GM10248 (cell line): ENCODE measurements at regions of chr1 and their contacts with region 1.

Region 1: GRCh38 chr1:17023102-17023501 is 11.4 kb upstream of the ATP13A2 start:
- DNase-seq: no peak
- CTCF ChIP-seq: no peak

Region 2: DNA sequence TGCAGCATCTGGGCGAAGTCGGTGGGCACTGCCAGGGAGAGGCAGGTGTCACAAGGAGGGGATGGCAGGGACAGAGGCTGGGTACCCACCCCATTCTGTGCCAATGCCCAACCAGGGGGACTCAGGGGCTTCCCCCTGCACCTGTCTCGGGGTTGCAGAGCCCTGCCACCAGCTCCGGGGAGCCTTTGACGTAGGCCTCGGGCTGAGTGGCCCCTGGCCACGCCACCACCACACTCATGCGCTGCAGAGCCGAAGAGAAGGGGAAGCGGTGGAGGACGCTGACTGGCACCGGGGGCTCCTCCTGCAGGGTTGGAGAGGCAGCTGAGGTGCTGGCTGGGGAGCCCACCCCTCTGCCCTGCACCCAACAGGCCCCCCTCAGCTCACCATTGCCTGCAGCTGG is 31.0 kb before region 1 on chr1:
- CTCF ChIA-PET with region 1: no interaction called
- POLR2A ChIA-PET with region 1: no interaction called
- DNase-seq: no peak
- CTCF ChIP-seq: no peak

Region 3: GRCh38 chr1:17011439-17012307 is 11.4 kb before region 1 on chr1 and contains the start of gene ATP13A2:
- CTCF ChIA-PET with region 1: interaction called, 16 read pairs
- POLR2A ChIA-PET with region 1: interaction called, 4 read pairs
- DNase-seq: peak; percentile 93
- CTCF ChIP-seq: no peak

Region 4: GRCh38 chr1:17066361-17067068 is 43.4 kb after region 1 on chr1:
- CTCF ChIA-PET with region 1: no interaction called
- POLR2A ChIA-PET with region 1: no interaction called
- DNase-seq: no peak
- CTCF ChIP-seq: no peak